ENCODE measurements at regions of chr11 and their contacts with region 1.

Region 1: DNA sequence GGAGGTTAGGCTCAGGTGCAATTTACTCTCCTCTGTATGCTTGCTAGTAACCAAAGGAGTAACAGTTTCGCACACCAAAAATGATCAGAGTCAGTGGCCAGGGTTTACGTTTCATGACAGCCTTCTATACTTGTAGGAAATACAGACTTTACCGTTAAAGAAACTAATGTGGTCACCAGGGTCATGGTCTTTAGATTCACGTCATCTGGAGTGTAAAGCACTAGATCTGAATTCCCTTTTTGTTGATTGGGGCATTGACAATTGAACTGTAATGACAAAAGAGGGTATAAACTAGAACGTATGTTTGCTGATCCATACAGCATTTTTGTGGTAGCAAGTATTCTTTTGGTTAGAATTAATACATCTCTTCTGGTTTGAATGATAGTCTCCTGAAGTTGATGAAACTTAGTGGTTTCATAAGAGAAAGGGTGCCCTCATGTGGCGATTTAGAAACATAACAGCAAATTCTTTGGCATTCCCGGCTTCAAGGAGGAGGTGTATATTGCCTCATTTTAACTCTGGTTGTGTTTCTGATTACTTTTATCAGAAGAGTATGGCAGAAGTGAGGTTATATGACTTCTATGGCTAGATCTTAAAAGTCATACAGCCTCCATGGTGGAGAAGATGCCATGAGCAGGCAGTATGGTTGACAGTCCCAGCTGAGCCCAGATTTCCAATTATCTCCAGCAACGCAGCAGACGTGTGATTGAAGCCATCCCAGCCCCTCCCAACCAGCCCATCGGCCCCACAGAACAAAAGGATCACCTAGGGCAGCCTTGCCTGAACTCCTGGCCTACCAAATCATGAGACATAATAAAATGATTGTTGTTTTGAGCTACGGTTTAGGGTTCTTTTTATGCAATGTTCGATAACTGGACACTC is 35.1 kb downstream of the MMP7 start:
- DNase-seq: peak; percentile 45
- ATAC-seq: peak; percentile 78
- H3K4me3 Mint-ChIP-seq: peak overlapping the region; percentile 15
- H3K27ac Mint-ChIP-seq: peak overlapping the region; percentile 39
- H3K4me1 Mint-ChIP-seq: peaks cover 16% of the 10 kb centered on the region
- H3K27me3 Mint-ChIP-seq: peaks cover 22% of the 10 kb centered on the region

Region 2: GRCh38 chr11:102513869-102514268 is 18.5 kb after region 1 on chr11:
- CTCF ChIA-PET with region 1: interaction called, 10 read pairs
- DNase-seq: no peak
- ATAC-seq: no peak
- H3K4me3 Mint-ChIP-seq: no peak overlapping the region
- H3K27ac Mint-ChIP-seq: no peak overlapping the region
- H3K4me1 Mint-ChIP-seq: no peaks in the 10 kb centered on the region
- H3K27me3 Mint-ChIP-seq: peaks cover 2% of the 10 kb centered on the region

Region 3: DNA sequence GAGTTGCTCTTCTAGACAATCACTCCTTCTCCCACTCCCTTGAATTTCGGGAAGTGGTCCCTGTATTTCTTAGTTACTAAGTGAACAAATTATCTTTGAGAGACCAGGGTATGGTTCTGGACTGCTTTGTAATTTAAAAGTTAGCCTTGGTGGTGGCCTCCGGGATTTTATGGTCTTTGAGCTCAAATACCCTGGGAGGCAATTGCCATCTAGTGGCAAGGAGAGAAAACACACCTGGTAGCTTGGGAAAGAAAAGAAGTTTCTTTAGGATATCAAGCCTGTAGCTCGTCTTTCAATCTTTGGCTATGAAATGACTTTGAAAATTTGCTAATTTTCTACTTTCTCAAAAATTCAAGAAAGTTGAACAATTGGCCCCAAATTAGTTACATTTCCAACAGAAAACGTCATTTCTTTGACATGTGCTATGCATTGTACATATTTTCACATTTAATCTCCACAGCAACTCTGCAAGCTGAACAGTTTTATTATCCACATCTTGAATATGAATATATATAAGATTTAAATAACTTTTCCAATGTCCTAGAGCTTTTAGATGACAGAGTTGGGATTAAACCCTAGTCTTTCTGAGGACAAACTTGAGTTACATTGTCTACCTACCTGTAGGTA is 171.0 kb after region 1 on chr11:
- CTCF ChIA-PET with region 1: interaction called, 10 read pairs
- DNase-seq: no peak
- ATAC-seq: peak; percentile 49
- H3K4me3 Mint-ChIP-seq: no peak overlapping the region
- H3K27ac Mint-ChIP-seq: no peak overlapping the region
- H3K4me1 Mint-ChIP-seq: no peaks in the 10 kb centered on the region
- H3K27me3 Mint-ChIP-seq: peaks cover 2% of the 10 kb centered on the region

Measured in activated CD8-positive, alpha-beta memory T cell treated with anti-CD3 and anti-CD28 coated beads, Interleukin-2, amount 10 ng/mL, durations not matched to agents 7 days and 5 days (primary cell).